Mammary epithelial cell (primary cell): ENCODE measurements at regions of chr7 and their contacts with region 1.

Region 1: DNA sequence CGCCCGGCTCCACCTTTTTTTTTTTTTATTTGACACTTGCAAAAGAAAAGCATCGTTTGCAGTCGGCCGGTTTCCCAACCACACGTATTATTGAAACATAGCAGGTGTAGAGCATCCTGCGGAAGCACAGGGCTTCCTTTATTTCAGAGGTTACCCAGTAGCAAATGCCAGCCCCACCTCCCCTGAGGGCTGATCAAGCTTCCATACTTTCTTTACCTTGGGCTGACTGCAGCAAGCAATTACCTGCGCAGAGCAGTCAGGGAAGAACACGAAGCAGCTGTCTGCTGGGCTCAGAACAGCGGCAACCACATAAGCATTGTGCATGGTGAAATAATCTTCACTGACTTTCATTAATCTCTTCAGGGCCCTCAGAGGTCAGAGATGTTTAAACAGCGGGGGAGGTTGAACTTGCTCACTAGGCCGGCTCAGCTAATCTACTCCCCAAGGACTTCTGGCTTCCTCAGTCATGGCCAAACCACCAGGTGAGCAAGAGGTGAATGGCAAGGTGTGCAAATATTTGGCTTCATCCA is 784.7 kb upstream of the AUTS2 start:
- DNase-seq: no peak
- H3K4me3 ChIP-seq: no peak overlapping the region
- H3K27ac ChIP-seq: no peak overlapping the region
- H3K4me1 ChIP-seq: no peaks in the 10 kb centered on the region
- H3K27me3 ChIP-seq: no peaks in the 10 kb centered on the region
- CTCF ChIP-seq: no peak

Region 2: DNA sequence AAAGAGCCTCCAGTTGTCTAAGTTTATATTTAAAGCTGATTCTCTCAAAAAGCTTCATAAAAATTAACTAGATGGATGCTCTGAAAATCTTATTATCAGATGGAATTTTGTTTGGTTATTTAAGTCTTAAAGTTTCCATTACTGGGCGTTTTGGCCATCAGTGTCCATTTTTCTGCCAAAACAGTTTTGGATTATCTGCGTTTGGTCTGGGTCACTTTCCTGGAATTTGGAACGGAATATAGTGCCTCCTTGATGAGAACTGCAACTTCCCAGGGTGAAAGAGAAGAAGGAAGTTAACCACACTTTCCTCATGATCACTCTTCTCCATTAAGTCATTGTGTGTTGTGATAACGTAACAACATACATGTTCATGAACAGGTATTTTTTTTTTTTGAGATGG is 19.8 kb after region 1 on chr7:
- CTCF ChIA-PET with region 1: no interaction called
- dilution Hi-C with region 1: no loop called
- in situ Hi-C with region 1: no loop called
- intact Hi-C with region 1: no loop called
- DNase-seq: no peak
- H3K4me3 ChIP-seq: no peak overlapping the region
- H3K27ac ChIP-seq: no peak overlapping the region
- H3K4me1 ChIP-seq: no peaks in the 10 kb centered on the region
- H3K27me3 ChIP-seq: no peaks in the 10 kb centered on the region
- CTCF ChIP-seq: no peak

Region 3: GRCh38 chr7:68857571-68857970 is 44.0 kb after region 1 on chr7:
- CTCF ChIA-PET with region 1: no interaction called
- dilution Hi-C with region 1: loop called (anchors 5 kb)
- in situ Hi-C with region 1: no loop called
- intact Hi-C with region 1: no loop called
- DNase-seq: no peak
- H3K4me3 ChIP-seq: no peak overlapping the region
- H3K27ac ChIP-seq: no peak overlapping the region
- H3K4me1 ChIP-seq: no peaks in the 10 kb centered on the region
- H3K27me3 ChIP-seq: no peaks in the 10 kb centered on the region
- CTCF ChIP-seq: no peak

Region 4: DNA sequence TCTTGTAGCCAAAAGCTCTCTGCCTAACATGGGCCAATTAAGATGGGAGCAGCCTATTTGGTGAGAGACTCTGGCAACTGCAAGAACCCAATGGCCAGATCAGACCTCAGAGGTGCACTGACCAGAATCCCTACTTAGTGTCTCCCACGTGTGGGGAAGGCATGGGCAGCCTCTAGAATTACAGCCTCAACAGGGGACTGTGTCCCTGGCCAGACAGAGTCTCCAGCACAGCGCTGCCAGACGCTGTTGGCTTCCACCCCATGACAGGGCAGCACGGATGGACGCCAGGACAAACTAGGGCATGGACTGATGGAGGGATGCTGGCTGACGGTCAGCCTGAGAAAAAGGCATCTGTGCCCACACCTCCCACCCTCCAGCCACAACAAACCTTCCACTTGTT is 55.4 kb after region 1 on chr7:
- CTCF ChIA-PET with region 1: no interaction called
- dilution Hi-C with region 1: no loop called
- in situ Hi-C with region 1: no loop called
- intact Hi-C with region 1: no loop called
- DNase-seq: no peak
- H3K4me3 ChIP-seq: no peak overlapping the region
- H3K27ac ChIP-seq: no peak overlapping the region
- H3K4me1 ChIP-seq: no peaks in the 10 kb centered on the region
- H3K27me3 ChIP-seq: no peaks in the 10 kb centered on the region
- CTCF ChIP-seq: no peak

Region 5: GRCh38 chr7:69109246-69109645 is 295.6 kb after region 1 on chr7:
- CTCF ChIA-PET with region 1: no interaction called
- dilution Hi-C with region 1: no loop called
- in situ Hi-C with region 1: no loop called
- intact Hi-C with region 1: no loop called
- DNase-seq: no peak
- H3K4me3 ChIP-seq: no peak overlapping the region
- H3K27ac ChIP-seq: no peak overlapping the region
- H3K4me1 ChIP-seq: no peaks in the 10 kb centered on the region
- H3K27me3 ChIP-seq: no peaks in the 10 kb centered on the region
- CTCF ChIP-seq: no peak